Activated CD4-positive, alpha-beta T cell treated with anti-CD3 and anti-CD28 coated beads, Interleukin-2, amount 10 ng/mL, durations not matched to agents 24 days and 14 days (primary cell): ENCODE measurements at regions of chr22 and their contacts with region 1.

Region 1: DNA sequence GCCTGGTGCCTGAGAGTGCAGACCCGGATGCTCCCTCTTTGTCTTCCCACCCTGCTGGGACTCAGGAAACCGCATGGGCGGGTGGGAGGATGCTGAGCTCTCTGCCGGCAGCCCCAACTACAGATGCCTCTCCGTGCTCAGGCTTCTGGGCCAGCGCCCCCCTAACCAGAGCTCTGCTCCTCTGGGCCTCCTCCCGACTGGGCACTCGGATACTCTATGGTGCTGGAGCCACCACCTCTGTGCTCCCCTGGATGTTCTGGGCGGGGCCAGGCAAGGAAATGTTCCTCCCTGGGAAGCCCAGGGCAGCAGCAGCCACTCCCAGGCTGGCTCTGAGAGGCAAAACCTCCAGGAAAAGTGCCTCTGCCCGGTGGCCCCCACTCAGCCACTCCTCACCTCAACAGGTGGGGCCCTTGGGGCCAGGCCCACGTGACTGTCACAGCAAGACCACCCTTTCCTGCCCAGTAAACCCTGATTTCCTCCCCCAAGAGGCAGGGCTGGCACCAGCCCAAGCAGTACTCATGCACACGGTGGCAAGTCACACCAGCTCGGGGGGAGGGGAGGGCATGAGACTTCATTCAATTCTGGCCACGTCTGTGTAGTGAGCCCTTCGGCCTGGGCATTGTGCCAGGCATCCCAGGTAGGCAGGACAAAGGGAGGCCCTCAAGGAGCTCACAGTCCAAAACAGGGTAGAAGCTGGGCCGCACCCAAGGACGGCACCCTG is 54.7 kb upstream of the TCF20 start:
- DNase-seq: no peak
- H3K4me3 Mint-ChIP-seq: no peak overlapping the region
- H3K27ac Mint-ChIP-seq: no peak overlapping the region
- H3K4me1 Mint-ChIP-seq: peaks cover 25% of the 10 kb centered on the region
- H3K27me3 Mint-ChIP-seq: no peaks in the 10 kb centered on the region

Region 2: GRCh38 chr22:41181349-41182241 is 1143.6 kb before region 1 on chr22:
- intact Hi-C with region 1: no loop called
- DNase-seq: no peak
- H3K4me3 Mint-ChIP-seq: no peak overlapping the region
- H3K27ac Mint-ChIP-seq: no peak overlapping the region
- H3K4me1 Mint-ChIP-seq: peaks cover 5% of the 10 kb centered on the region
- H3K27me3 Mint-ChIP-seq: no peaks in the 10 kb centered on the region

Region 3: GRCh38 chr22:42419243-42419881 is 94.2 kb after region 1 on chr22:
- intact Hi-C with region 1: loop called (anchors 5 kb)
- DNase-seq: no peak
- H3K4me3 Mint-ChIP-seq: no peak overlapping the region
- H3K27ac Mint-ChIP-seq: no peak overlapping the region
- H3K4me1 Mint-ChIP-seq: no peaks in the 10 kb centered on the region
- H3K27me3 Mint-ChIP-seq: peaks cover 2% of the 10 kb centered on the region